ENCODE measurements at regions of chr6 and their contacts with region 1.

Region 1: GRCh38 chr6:143695130-143695968 is 17.6 kb downstream of the PHACTR2 start:
- DNase-seq: no peak
- ATAC-seq: peak in 2 of 8 donors; percentile 20 to 48
- H3K4me3 ChIP-seq: peak overlapping the region in 2 of 10 donors; percentile 3 to 6
- H3K27ac ChIP-seq: peak overlapping the region in 8 of 10 donors; percentile 6 to 77 (median 46)
- H3K4me1 ChIP-seq: peaks cover 0 to 100% (median 84%) of the 10 kb centered on the region in 9 donors
- H3K27me3 ChIP-seq: no peaks in the 10 kb centered on the region
- CTCF ChIP-seq: no peak

Region 2: DNA sequence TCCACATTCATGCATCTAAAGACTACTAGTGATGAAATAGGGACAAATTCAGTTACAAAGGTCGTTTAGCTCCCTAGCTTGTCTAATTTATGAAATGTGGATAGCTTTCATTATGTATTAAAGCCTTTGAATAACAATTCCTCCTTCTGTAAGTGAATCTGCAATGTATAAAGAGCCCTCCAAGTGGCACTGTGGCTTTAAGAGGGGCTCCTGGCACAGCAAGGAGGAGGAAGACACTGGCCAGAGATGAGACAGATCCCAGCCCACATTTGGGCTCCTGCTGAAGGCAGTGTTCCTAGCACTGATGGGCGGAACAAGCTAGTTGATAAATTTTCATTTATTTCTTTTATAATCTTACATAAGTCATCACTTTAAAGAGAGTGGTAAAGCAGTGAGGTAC is 166.3 kb before region 1 on chr6:
- intact Hi-C with region 1: no loop called
- DNase-seq: no peak
- ATAC-seq: no peak
- H3K4me3 ChIP-seq: no peak overlapping the region
- H3K27ac ChIP-seq: no peak overlapping the region
- H3K4me1 ChIP-seq: peaks cover 0 to 9% (median 0%) of the 10 kb centered on the region in 9 donors
- H3K27me3 ChIP-seq: no peaks in the 10 kb centered on the region
- CTCF ChIP-seq: peak in 2 of 9 donors; percentile 10 to 18

Region 3: GRCh38 chr6:143734641-143735063 is 39.3 kb after region 1 on chr6:
- intact Hi-C with region 1: loop called in 3 of 10 experiments (anchors 5 kb)
- DNase-seq: no peak
- ATAC-seq: peak in 7 of 8 donors; percentile 37 to 86 (median 68)
- H3K4me3 ChIP-seq: peak overlapping the region in 1 of 10 donors; percentile 14
- H3K27ac ChIP-seq: peak overlapping the region in 6 of 10 donors; percentile 2 to 65 (median 26)
- H3K4me1 ChIP-seq: peaks cover 0 to 81% (median 41%) of the 10 kb centered on the region in 9 donors
- H3K27me3 ChIP-seq: no peaks in the 10 kb centered on the region
- CTCF ChIP-seq: no peak

Region 4: GRCh38 chr6:143745166-143746133 is 50.1 kb after region 1 on chr6:
- intact Hi-C with region 1: loop called in 2 of 10 experiments (anchors 5 to 10 kb)
- DNase-seq: peak in 1 of 2 donors; percentile 52
- ATAC-seq: peak; percentile 26 to 77 (median 61)
- H3K4me3 ChIP-seq: peak overlapping the region in 6 of 10 donors; percentile 2 to 19 (median 14)
- H3K27ac ChIP-seq: peak overlapping the region; percentile 31 to 85 (median 68)
- H3K4me1 ChIP-seq: peaks cover 21 to 91% (median 69%) of the 10 kb centered on the region in 9 donors
- H3K27me3 ChIP-seq: no peaks in the 10 kb centered on the region
- CTCF ChIP-seq: no peak

Region 5: GRCh38 chr6:143822584-143823024 is 127.3 kb after region 1 on chr6:
- intact Hi-C with region 1: no loop called
- DNase-seq: no peak
- ATAC-seq: no peak
- H3K4me3 ChIP-seq: no peak overlapping the region
- H3K27ac ChIP-seq: peak overlapping the region in 3 of 10 donors; percentile 7 to 49 (median 42)
- H3K4me1 ChIP-seq: peaks cover 0 to 28% (median 7%) of the 10 kb centered on the region in 9 donors
- H3K27me3 ChIP-seq: no peaks in the 10 kb centered on the region
- CTCF ChIP-seq: no peak

Measured in heart right ventricle (tissue), 16 donors.